K562 (cell line): ENCODE measurements at regions of chr2 and their contacts with region 1.

Region 1: DNA sequence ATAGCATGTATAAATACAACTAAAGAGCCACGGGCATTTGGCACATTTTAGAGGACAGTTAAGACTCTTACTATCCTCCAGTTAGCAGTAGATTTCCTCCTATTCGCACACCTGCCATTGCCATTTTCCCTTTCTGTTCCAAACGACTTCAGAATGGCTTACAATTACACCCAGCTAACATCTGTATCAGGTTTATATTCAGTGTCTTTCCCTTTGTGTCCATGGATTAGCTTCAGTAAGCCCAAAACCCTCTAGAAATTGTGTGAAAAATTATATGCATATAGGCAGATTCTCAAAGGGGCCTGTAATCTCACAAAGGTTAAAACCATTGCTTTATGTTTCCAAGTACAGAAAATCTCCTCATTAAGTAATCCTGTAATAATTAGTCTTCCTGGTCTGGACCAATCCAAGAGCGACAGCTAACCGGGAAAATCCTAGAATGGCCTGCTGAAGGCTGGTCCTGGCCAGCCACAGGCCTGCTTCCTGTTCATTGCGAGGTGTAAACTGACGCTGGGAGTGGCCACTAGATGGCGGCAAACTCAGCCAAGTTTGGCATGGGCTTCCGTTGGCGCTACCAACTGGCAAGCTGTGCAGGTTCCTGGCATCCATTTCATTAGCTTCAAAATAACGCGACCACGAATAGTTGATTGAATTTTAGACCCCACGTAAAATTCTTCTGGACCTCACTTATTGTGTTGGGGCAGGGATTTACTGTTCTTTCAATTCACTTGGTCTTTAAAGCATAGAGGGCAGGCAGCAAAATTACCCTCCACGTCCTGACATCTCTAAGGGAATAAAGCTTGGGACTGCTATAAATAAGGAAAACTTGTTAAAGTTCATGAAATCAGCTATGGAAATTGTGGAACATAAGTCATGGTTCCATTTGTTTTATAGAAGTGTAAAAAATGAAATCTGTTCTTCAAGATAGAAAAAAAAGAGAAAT is 17.1 kb downstream of the ARHGAP25 start:
- DNase-seq: peak; percentile 76 to 87 (median 77)
- ATAC-seq: peak; percentile 98
- H3K4me3 ChIP-seq: no peak overlapping the region
- H3K27ac ChIP-seq: no peak overlapping the region
- H3K4me1 ChIP-seq: peaks cover 0 to 12% of the 10 kb centered on the region in 2 experiments; a peak in 2 of 5 replicates
- H3K27me3 ChIP-seq: no peaks in the 10 kb centered on the region
- CTCF ChIP-seq: peak; percentile 91 to 95 (median 95)
- EP300 ChIP-seq: no peak
- POLR2A ChIP-seq: no peak
- RAD21 ChIP-seq: peak; percentile 91 to 95

Region 2: DNA sequence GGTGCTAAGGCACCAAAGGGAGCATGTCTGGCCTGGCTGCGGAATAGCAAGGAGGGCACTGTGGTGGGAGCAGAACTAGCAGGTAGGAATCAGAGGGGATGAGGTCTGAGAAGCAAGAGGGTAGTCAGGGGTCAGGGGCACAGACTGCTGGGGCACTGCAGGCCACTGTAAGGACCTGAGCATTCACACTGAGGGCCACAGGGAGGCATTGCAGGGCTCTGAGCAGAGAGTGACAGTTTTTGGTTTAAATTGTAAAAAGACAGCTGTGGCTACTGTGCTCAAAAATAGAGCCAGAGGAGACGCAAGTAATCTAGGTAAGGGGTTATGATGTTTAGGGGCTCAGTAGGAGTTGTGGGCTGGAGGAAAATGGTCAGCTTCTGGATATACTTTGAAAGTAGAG is 24.5 kb after region 1 on chr2:
- CTCF ChIA-PET with region 1: no interaction called
- POLR2A ChIA-PET with region 1: interaction called, 3 read pairs
- in situ Hi-C with region 1: no loop called
- intact Hi-C with region 1: loop called (anchors 2 kb)
- DNase-seq: peak in 1 of 4 experiments; percentile 32
- ATAC-seq: peak; percentile 68
- H3K4me3 ChIP-seq: peak overlapping the region; percentile 33; the same call in 1 of the 2 replicates
- H3K27ac ChIP-seq: no peak overlapping the region
- H3K4me1 ChIP-seq: peaks cover 16 to 56% of the 10 kb centered on the region in 2 experiments
- H3K27me3 ChIP-seq: no peaks in the 10 kb centered on the region
- CTCF ChIP-seq: peak; percentile 27 to 53 (median 44); a peak in 4 of 6 replicates
- EP300 ChIP-seq: no peak
- POLR2A ChIP-seq: no peak
- RAD21 ChIP-seq: peak; percentile 47 to 60